ENCODE measurements at regions of chr19 and their contacts with region 1.

Region 1: DNA sequence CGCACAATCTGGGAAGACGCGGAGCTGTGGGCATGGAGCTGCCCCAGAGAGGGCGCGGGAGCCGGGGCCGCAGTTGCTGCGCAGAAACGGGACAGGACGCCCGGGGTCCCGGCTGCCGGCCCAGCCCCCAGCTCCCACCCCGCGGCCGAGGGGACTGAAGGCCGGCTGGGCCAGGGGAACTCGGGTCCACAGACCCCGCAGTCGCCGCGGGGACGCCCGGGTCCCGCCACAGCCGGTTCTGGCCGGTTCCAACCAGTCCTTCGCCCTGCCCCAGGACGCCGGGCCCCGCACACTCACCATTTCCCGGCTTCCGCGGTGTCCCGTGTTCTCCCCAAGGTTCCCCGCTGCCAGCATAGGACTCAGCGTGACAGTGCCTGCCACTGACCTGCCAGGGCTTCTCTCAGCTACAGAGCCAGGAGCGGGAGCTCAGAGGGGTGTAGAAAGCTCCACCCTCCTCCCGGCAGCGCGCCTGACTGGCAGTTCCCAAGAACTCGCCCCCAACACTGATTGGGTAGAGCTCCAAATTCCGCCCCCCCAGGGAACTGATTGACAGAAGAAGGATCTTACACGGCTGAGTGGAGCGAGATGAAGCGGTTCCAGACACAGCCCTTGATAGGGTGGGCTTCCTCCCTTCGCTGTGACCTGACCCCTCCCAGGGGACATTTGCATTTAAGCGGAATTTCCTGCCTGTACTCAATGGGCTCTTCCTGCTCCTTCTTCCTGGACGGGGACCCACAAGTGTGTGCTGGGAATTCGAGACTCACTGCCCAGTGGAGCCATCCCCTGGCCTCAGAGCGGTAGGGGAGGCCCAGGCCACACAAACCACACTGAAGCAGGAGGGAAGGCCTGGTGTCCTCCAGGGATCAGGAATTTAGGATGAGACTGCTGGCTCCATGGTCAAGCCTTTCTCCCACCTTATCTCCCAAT is at the start of gene ZNF442:
- DNase-seq: peak; percentile 94 to 98 (median 97)
- H3K4me3 ChIP-seq: peak within 1 kb of the TSS; percentile 69
- H3K27ac ChIP-seq: peak within 1 kb of the TSS; percentile 58 to 95
- H3K4me1 ChIP-seq: peaks cover 8% of the 10 kb centered on the region
- H3K27me3 ChIP-seq: no peaks in the 10 kb centered on the region
- CTCF ChIP-seq: peak; percentile 48 to 90 (median 62)
- EP300 ChIP-seq: no peak
- POLR2A ChIP-seq: peak; percentile 87
- total RNA-seq, gene ZNF442: 2.4 to 18.9 (median 9.4) TPM

Region 2: GRCh38 chr19:12294249-12295158 is 71.0 kb before region 1 on chr19 and contains the start of gene ZNF44:
- intact Hi-C with region 1: loop called in 1 of 4 experiments (anchors 5 kb)
- DNase-seq: peak; percentile 96 to 98 (median 98)
- H3K4me3 ChIP-seq: peak within 1 kb of the TSS; percentile 91
- H3K27ac ChIP-seq: peak within 1 kb of the TSS; percentile 59 to 91
- H3K4me1 ChIP-seq: peaks cover 8% of the 10 kb centered on the region
- H3K27me3 ChIP-seq: no peaks in the 10 kb centered on the region
- CTCF ChIP-seq: peak in 1 of 3 donors; percentile 16
- EP300 ChIP-seq: no peak
- POLR2A ChIP-seq: peak; percentile 71
- total RNA-seq, gene ZNF44: 10.1 to 33.3 (median 16.6) TPM

Measured in ovary (tissue), 10 donors.